B cell (primary cell): ENCODE measurements at regions of chr12 and their contacts with region 1.

Region 1: DNA sequence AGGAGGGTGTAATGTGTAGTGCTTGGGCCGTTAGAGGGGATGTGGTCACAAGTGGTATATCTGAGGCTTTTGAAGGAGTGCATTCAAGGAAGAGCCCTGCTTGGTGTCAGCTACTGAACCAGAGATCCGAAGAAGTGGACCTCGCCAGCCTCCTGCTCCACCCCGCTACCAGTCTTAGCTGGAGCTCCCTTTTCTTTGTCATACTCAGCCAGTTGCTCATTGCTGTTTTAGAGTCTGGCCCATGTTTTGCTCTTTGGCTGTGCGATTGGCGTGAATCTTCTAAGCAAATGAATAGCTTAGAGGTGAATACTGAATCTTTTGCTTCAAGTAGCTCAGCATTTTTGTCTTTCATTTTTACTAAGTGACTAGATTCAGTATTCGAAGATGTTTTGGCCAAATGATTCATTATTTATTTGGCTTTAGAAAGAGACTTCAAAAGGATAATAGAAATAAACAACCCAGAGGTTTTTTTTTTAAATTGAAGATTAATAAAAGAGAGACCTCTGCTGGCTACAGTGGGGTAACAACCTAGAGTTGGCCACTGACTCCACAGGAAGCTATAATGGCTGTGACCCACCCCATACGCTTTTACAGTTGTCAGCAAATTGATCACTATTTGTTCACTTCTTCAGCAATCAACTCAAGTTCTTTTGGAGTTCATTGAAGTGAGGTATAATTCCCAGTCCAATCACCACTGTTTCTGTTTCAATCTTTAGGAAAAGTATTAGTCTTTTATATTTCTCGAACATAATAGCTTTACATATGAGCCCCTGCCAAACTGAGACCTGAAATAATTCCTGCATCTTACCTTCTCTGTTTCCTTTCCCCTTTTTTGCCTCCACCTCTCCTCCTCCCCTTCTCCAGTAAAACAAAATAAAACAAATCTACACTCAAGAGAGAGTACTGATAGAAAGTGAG is 19.9 kb downstream of the CDKN1B start:
- DNase-seq: peak; percentile 72
- ATAC-seq: peak; percentile 87
- H3K4me3 ChIP-seq: peak overlapping the region in 3 of 5 experiments; percentile 7 to 49 (median 44)
- H3K4me3 Mint-ChIP-seq: peak overlapping the region; percentile 66
- H3K27ac ChIP-seq: peak overlapping the region; percentile 32 to 64
- H3K27ac Mint-ChIP-seq: peak overlapping the region; percentile 85
- H3K4me1 ChIP-seq: peaks cover 6 to 14% of the 10 kb centered on the region in 2 donors
- H3K4me1 Mint-ChIP-seq: peaks cover 14% of the 10 kb centered on the region
- H3K27me3 ChIP-seq: no peaks in the 10 kb centered on the region
- H3K27me3 Mint-ChIP-seq: no peaks in the 10 kb centered on the region
- CTCF ChIP-seq: peak; percentile 81

Region 2: DNA sequence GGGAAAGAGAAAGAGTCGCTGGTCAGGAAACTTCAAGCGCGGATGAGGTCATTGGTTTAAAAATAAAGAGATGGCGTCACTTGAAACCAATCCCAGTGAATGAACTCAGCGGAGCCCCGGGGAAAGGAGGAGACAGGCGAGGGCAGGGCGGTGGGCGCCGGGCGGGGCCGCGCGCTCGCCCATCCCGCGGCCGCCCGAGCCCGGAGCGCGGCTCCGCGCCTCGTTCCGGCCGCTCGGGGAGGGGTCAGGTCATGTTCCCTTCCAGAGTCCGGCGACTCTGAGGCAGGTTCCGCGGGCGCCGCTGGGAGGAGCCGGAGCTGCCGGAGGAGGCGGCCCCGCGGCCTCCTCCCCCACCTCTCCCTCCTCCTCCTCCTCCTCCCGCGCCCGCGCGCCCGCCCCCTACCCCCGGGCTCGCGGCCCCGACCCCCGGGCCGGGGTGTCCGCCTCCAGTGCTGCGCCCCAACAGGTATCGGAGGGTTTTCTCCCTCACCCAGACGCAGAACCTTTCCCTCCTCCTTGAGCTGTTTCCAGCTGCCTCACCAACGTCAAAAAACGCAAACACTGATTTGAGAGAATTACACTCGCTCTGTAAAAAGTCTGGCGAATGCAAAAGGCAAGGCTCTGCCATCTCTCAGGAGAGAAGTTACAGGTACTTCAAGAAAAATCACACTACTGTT is 174.3 kb before region 1 on chr12 and contains the start of gene DUSP16:
- CTCF ChIA-PET with region 1: interaction called, 29 read pairs
- POLR2A ChIA-PET with region 1: no interaction called
- intact Hi-C with region 1: loop called (anchors 1 kb)
- DNase-seq: peak; percentile 90
- ATAC-seq: peak; percentile 70
- H3K4me3 ChIP-seq: peak within 1 kb of the TSS; percentile 55 to 78 (median 72)
- H3K4me3 Mint-ChIP-seq: peak within 1 kb of the TSS; percentile 95
- H3K27ac ChIP-seq: peak within 1 kb of the TSS; percentile 38 to 82
- H3K27ac Mint-ChIP-seq: peak within 1 kb of the TSS; percentile 92
- H3K4me1 ChIP-seq: peaks cover 17 to 18% of the 10 kb centered on the region in 2 donors
- H3K4me1 Mint-ChIP-seq: peaks cover 20% of the 10 kb centered on the region
- H3K27me3 ChIP-seq: peaks cover 0 to 9% (median 3%) of the 10 kb centered on the region in 4 experiments
- H3K27me3 Mint-ChIP-seq: peaks cover 8% of the 10 kb centered on the region
- CTCF ChIP-seq: no peak
- total RNA-seq, gene DUSP16: 5.6 and 5.9 TPM in 2 replicates

Region 3: DNA sequence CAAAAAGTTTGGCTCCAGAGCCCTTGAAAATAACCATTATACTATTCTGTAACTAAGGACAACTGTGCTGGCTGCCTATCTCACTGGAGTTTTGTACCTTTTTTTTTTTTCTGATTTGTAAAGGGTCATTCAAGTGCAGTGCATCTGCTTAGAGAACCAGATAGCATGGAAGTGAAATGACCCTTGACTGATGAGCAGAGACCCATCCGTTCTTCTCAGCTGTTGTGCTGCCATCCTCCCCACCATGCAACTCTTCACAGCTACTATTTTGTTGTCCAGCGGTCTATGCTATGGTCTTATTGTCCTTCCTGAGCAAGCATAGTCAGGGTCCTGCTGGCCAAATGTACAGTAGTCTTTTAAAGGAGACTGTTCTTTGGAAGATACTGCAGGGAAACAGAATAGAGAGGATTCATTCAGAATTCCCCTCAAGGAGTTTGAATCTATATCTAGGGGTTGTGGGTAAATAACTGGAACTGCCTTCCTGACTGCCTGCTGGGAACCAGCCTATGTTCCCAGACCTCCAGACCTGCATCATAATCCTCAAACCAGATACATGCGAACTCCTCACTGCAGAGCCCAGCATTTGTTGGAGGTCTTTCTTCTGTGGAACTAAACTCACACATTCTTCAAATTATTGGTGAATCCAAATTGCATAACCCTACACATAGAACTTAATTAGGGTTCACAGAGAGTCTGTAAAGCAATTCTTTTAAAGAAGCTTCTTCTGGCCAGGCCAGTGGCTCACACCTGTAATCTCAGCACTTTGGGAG is 82.1 kb before region 1 on chr12:
- CTCF ChIA-PET with region 1: interaction called, 17 read pairs
- POLR2A ChIA-PET with region 1: no interaction called
- intact Hi-C with region 1: no loop called
- DNase-seq: no peak
- ATAC-seq: no peak
- H3K4me3 ChIP-seq: no peak overlapping the region
- H3K4me3 Mint-ChIP-seq: no peak overlapping the region
- H3K27ac ChIP-seq: no peak overlapping the region
- H3K27ac Mint-ChIP-seq: no peak overlapping the region
- H3K4me1 ChIP-seq: peaks cover 3 to 9% of the 10 kb centered on the region in 2 donors
- H3K4me1 Mint-ChIP-seq: peaks cover 6% of the 10 kb centered on the region
- H3K27me3 ChIP-seq: no peaks in the 10 kb centered on the region
- H3K27me3 Mint-ChIP-seq: no peaks in the 10 kb centered on the region
- CTCF ChIP-seq: no peak

Region 4: GRCh38 chr12:12704593-12705230 is 32.3 kb before region 1 on chr12:
- CTCF ChIA-PET with region 1: interaction called, 17 read pairs
- POLR2A ChIA-PET with region 1: interaction called, 4 read pairs
- intact Hi-C with region 1: loop called (anchors 2 kb)
- DNase-seq: peak; percentile 77
- ATAC-seq: peak; percentile 97
- H3K4me3 ChIP-seq: no peak overlapping the region
- H3K4me3 Mint-ChIP-seq: no peak overlapping the region
- H3K27ac ChIP-seq: no peak overlapping the region
- H3K27ac Mint-ChIP-seq: no peak overlapping the region
- H3K4me1 ChIP-seq: peaks cover 0 to 3% of the 10 kb centered on the region in 2 donors
- H3K4me1 Mint-ChIP-seq: peaks cover 7% of the 10 kb centered on the region
- H3K27me3 ChIP-seq: no peaks in the 10 kb centered on the region
- H3K27me3 Mint-ChIP-seq: no peaks in the 10 kb centered on the region
- CTCF ChIP-seq: peak; percentile 86

Region 5: DNA sequence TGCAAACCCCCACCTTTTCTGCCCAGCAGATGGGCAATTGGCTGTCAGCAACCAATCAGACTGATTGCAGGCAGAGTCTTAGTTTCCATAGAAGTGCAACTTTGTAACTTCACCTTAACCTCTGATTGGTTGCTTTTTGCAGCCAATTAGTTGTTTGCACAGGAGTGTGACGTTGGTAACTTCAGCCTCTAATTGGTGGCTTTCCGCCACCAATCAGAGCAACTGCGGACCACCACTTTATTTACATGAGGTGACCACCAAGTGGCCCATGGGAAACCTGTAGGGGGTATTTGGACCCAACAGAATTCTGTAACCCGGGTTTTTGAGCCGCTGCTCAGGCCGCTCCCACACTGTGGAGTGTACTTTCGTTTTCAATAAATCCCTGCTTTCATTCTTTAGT is 12.4 kb after region 1 on chr12:
- CTCF ChIA-PET with region 1: interaction called, 11 read pairs
- POLR2A ChIA-PET with region 1: no interaction called
- intact Hi-C with region 1: no loop called
- DNase-seq: no peak
- ATAC-seq: no peak
- H3K4me3 ChIP-seq: no peak overlapping the region
- H3K4me3 Mint-ChIP-seq: no peak overlapping the region
- H3K27ac ChIP-seq: no peak overlapping the region
- H3K27ac Mint-ChIP-seq: no peak overlapping the region
- H3K4me1 ChIP-seq: no peaks in the 10 kb centered on the region
- H3K4me1 Mint-ChIP-seq: peaks cover 3% of the 10 kb centered on the region
- H3K27me3 ChIP-seq: no peaks in the 10 kb centered on the region
- H3K27me3 Mint-ChIP-seq: no peaks in the 10 kb centered on the region
- CTCF ChIP-seq: no peak

Region 6: GRCh38 chr12:12872139-12872881 is 135.3 kb after region 1 on chr12:
- CTCF ChIA-PET with region 1: no interaction called
- POLR2A ChIA-PET with region 1: no interaction called
- intact Hi-C with region 1: no loop called
- DNase-seq: no peak
- ATAC-seq: no peak
- H3K4me3 ChIP-seq: no peak overlapping the region
- H3K4me3 Mint-ChIP-seq: no peak overlapping the region
- H3K27ac ChIP-seq: no peak overlapping the region
- H3K27ac Mint-ChIP-seq: no peak overlapping the region
- H3K4me1 ChIP-seq: no peaks in the 10 kb centered on the region
- H3K4me1 Mint-ChIP-seq: no peaks in the 10 kb centered on the region
- H3K27me3 ChIP-seq: no peaks in the 10 kb centered on the region
- H3K27me3 Mint-ChIP-seq: peaks cover 3% of the 10 kb centered on the region
- CTCF ChIP-seq: no peak